Body of pancreas (tissue), 4 donors: ENCODE measurements at regions of chr11 and their contacts with region 1.

Region 1: DNA sequence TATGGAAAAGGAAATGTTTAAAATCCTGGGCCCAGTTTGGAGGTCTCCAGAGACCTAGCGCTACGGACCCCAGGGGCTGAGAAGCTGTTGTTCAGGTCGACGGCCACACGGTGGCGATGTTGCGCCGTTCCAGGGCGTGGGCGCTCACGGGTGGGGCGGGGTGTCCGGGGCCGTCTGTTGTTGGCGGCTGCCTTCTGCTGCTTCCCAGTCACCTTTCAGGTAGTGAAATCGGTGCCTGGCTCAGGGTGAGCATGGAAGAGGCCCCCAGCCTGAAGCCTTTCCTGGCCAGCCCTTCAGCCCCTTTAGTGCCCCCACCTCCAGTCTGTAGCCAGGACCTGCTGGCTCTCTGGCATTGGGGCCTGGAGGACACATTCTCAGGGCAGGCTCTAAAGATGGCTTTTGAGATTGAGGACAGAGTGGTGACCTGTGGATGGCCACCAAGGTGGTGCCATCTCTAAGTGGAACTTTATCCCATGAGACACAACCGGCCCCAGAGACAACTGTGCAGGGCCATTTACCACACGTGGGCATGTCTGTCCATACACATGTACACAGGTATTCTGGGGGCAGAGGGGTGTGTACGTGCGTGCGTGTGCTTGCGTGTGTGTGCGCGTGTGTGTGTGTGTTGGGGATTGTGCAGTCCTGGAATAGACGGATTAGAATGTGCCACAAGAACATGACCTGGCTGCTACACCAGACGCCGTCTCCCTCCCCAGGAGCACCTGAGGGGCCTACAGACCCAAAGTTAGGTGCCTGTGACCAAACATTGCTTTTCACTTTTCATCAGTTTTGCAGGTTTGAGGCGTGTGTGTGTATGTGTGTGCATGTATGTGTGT is 53.8 kb downstream of the ST14 start:
- DNase-seq: peak; percentile 63 to 73 (median 70)
- ATAC-seq: peak; percentile 78
- H3K4me3 ChIP-seq: no peak overlapping the region
- H3K27ac ChIP-seq: no peak overlapping the region
- H3K4me1 ChIP-seq: peaks cover 8% of the 10 kb centered on the region
- H3K27me3 ChIP-seq: no peaks in the 10 kb centered on the region
- CTCF ChIP-seq: peak; percentile 79 to 95 (median 87)
- POLR2A ChIP-seq: no peak

Region 2: DNA sequence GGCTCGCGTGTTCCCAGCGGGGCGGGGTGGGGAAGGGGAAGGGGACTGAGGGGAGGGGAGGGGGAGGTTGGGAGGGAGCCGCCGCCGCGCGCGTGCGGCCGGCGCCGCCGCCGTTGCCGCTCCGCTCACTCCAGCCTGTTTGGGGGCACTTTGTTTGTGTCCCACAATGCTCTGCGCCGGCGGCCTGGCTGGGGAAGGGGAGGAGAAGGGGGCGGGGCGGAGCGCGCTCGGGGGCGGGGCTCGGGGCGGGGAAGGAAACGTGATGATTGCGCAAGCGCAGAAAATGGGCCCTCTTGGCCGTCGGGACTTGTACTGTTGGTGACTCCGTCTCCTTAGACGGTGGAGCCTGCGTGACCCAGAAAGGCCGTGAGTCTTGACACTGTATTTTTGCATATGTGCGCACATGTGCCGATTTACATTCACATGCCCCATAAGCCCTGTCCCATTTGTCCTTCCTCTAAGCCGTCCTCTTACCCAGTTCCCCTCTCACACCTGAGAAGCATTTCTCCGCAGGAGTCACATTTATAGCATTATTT is 101.5 kb after region 1 on chr11 and contains the start of gene ZBTB44:
- intact Hi-C with region 1: loop called (anchors 10 kb)
- DNase-seq: peak; percentile 93 to 94 (median 94)
- ATAC-seq: peak; percentile 89
- H3K4me3 ChIP-seq: peak within 1 kb of the TSS; percentile 44 to 85
- H3K27ac ChIP-seq: peak within 1 kb of the TSS; percentile 91 to 98 (median 94)
- H3K4me1 ChIP-seq: peaks cover 59% of the 10 kb centered on the region
- H3K27me3 ChIP-seq: no peaks in the 10 kb centered on the region
- CTCF ChIP-seq: no peak
- POLR2A ChIP-seq: peak in 2 of 3 donors; percentile 75 to 77
- total RNA-seq, gene ZBTB44: 25.4 to 32.9 TPM

Region 3: DNA sequence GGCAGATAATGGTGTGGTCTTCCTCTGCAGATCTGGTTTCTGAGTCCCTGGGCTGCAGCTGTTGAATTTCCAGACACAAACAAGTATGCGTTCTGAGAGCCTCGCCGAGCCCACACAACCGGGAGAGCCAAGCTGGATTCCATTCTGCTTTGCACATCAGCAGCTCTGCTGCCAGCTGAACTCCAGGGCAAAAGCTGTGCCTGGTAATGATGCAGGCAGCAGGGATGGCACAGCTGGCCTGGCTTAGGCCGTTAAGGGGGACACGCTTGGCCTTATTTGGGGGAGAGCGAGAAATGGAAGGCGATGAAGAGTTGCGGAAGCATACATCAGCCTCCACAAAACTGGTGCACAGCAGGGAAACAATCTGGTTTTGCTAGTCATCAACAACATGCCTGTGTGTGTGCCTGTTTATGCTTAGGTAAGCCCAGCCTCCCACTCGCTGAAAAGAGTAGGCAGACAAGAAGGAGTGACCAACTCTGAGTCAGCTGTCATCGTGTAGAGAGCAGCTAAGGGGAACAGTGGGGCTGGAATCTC is 190.0 kb after region 1 on chr11:
- intact Hi-C with region 1: loop called (anchors 10 kb)
- DNase-seq: peak; percentile 20 to 43 (median 29)
- ATAC-seq: peak; percentile 36
- H3K4me3 ChIP-seq: no peak overlapping the region
- H3K27ac ChIP-seq: peak overlapping the region in 1 of 4 donors; percentile 48
- H3K4me1 ChIP-seq: peaks cover 8% of the 10 kb centered on the region
- H3K27me3 ChIP-seq: no peaks in the 10 kb centered on the region
- CTCF ChIP-seq: no peak
- POLR2A ChIP-seq: no peak